ENCODE measurements at regions of chr12 and their contacts with region 1.

Region 1: DNA sequence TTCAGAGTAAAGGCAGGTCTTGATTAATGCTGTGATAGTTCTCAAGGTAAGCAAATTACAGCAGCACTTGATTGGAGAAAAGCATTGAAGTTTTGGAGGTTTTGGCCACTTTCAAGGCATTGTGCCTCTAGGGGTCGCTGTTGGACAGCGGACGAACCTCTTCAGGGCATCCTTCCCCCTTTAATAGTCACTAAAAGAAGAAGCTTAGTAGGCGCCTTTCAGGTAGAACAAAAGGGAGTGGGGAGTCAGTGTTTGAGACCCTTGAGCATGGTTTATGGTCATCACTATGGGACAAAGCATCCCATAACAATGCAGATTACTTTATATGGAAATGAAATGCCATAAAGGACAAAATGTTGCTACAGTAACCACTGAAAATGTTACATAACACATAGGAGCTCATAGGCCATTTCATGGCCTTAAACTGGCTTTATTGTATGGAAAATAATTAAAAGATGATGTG is 199.5 kb upstream of the DCN start:
- DNase-seq: peak; percentile 37
- ATAC-seq: peak; percentile 74
- H3K4me3 ChIP-seq: no peak overlapping the region
- H3K27ac ChIP-seq: no peak overlapping the region
- H3K4me1 ChIP-seq: no peaks in the 10 kb centered on the region
- H3K27me3 ChIP-seq: no peaks in the 10 kb centered on the region
- CTCF ChIP-seq: peak; percentile 83
- EP300 ChIP-seq: no peak
- POLR2A ChIP-seq: no peak
- RAD21 ChIP-seq: peak; percentile 57

Region 2: GRCh38 chr12:91695951-91696350 is 313.8 kb after region 1 on chr12:
- CTCF ChIA-PET with region 1: no interaction called
- POLR2A ChIA-PET with region 1: no interaction called
- in situ Hi-C with region 1: no loop called
- intact Hi-C with region 1: loop called (anchors 10 kb)
- DNase-seq: no peak
- ATAC-seq: no peak
- H3K4me3 ChIP-seq: no peak overlapping the region
- H3K27ac ChIP-seq: no peak overlapping the region
- H3K4me1 ChIP-seq: no peaks in the 10 kb centered on the region
- H3K27me3 ChIP-seq: no peaks in the 10 kb centered on the region
- CTCF ChIP-seq: no peak
- EP300 ChIP-seq: no peak
- POLR2A ChIP-seq: no peak
- RAD21 ChIP-seq: no peak

Region 3: DNA sequence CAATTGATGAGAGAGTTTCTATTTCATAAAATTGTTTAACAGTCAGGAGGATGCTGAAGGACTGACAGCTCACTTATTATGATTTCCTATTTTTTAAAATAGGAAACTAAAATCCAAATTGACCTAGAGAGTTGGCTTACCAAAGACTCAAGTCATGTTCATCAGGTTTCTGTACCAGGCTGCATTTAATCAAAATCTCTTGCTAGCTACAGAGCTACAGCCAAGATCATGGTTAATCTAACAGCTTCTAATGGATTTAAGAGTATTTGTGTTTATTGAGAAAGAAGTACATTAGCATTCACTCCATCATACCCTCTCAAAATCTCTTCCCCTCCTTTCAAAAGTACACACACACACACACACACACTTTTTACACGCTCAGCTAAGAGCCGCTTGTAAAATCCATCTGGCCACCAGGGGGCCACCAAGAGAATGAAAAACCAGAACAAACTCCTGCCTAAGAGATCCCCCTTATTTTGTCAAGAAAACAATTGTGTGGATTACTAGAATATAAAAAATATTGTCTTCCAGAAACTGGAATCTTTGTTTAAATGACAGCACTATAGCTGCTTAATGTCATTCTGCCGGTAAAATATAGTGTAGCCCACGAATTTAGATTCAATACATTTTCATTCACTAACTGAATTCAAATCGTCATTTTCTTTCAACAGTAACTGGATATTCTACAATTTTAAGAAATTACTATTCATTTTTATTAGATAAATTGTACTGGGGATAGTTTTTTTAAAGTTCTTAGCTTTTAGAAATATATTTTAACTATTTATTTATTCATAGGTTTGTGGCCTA is 429.6 kb after region 1 on chr12:
- CTCF ChIA-PET with region 1: no interaction called
- POLR2A ChIA-PET with region 1: no interaction called
- in situ Hi-C with region 1: no loop called
- intact Hi-C with region 1: loop called (anchors 1 kb)
- DNase-seq: peak; percentile 42
- ATAC-seq: peak; percentile 58
- H3K4me3 ChIP-seq: no peak overlapping the region
- H3K27ac ChIP-seq: no peak overlapping the region
- H3K4me1 ChIP-seq: no peaks in the 10 kb centered on the region
- H3K27me3 ChIP-seq: no peaks in the 10 kb centered on the region
- CTCF ChIP-seq: peak; percentile 64
- EP300 ChIP-seq: no peak
- POLR2A ChIP-seq: no peak
- RAD21 ChIP-seq: 0 out of 2 replicates have a peak, but pooled peaks have one; percentile 34

Region 4: DNA sequence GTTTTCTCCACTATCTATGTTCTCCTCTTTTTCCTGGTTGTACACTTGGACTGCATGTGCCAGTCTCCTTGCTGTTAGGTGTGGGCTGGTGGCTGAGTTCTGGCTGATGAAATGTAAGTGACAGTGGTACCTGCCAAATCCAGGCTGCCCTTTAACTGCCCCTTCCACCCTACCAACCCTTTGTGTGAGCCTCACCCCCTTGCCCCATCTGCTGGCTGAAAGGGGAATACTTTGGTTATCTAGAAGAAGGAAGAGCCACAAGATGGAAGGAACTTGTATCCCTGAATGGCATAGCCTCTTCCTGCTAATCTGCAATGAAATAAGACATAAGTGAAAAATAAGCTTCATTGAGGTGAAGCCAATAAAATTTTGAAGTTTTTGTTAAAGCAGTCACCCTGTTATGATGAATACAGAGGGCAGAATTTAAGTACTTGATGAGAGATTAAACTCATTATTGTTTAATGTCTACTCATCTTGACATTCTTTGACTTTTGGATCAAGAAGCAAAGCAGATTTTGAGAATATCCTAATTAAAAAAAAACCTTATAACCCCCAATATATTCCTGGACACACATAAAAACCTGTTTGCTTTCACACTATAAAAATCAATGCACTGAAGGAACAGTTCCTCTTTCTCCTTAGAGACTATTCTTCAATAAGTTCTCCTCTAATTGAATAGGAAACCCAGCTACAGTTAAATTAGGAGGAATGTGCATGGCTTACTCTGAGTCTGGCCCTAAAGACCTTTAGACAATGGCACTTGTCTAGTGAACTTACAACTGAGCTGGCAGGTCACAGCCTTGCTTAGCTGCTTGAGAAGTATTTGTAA is 1026.2 kb after region 1 on chr12:
- CTCF ChIA-PET with region 1: interaction called, 7 read pairs
- POLR2A ChIA-PET with region 1: no interaction called
- in situ Hi-C with region 1: loop called (anchors 25 kb)
- intact Hi-C with region 1: loop called (anchors 1 kb)
- DNase-seq: peak; percentile 4
- ATAC-seq: peak; percentile 81
- H3K4me3 ChIP-seq: no peak overlapping the region
- H3K27ac ChIP-seq: no peak overlapping the region
- H3K4me1 ChIP-seq: no peaks in the 10 kb centered on the region
- H3K27me3 ChIP-seq: no peaks in the 10 kb centered on the region
- CTCF ChIP-seq: peak; percentile 70
- EP300 ChIP-seq: no peak
- POLR2A ChIP-seq: no peak
- RAD21 ChIP-seq: no peak

Region 5: GRCh38 chr12:92608151-92609091 is 1226.3 kb after region 1 on chr12:
- CTCF ChIA-PET with region 1: interaction called, 4 read pairs
- POLR2A ChIA-PET with region 1: no interaction called
- in situ Hi-C with region 1: loop called (anchors 25 kb)
- intact Hi-C with region 1: loop called (anchors 1 kb)
- DNase-seq: peak; percentile 25
- ATAC-seq: peak; percentile 55; the same call in 1 of the 3 replicates
- H3K4me3 ChIP-seq: no peak overlapping the region
- H3K27ac ChIP-seq: no peak overlapping the region
- H3K4me1 ChIP-seq: no peaks in the 10 kb centered on the region
- H3K27me3 ChIP-seq: no peaks in the 10 kb centered on the region
- CTCF ChIP-seq: peak; percentile 59
- EP300 ChIP-seq: no peak
- POLR2A ChIP-seq: no peak
- RAD21 ChIP-seq: no peak

Region 6: GRCh38 chr12:92649511-92650227 is 1267.6 kb after region 1 on chr12:
- CTCF ChIA-PET with region 1: interaction called, 5 read pairs
- POLR2A ChIA-PET with region 1: no interaction called
- in situ Hi-C with region 1: no loop called
- intact Hi-C with region 1: loop called (anchors 1 kb)
- DNase-seq: peak; percentile 59
- ATAC-seq: peak; percentile 98
- H3K4me3 ChIP-seq: no peak overlapping the region
- H3K27ac ChIP-seq: no peak overlapping the region
- H3K4me1 ChIP-seq: no peaks in the 10 kb centered on the region
- H3K27me3 ChIP-seq: no peaks in the 10 kb centered on the region
- CTCF ChIP-seq: peak; percentile 83
- EP300 ChIP-seq: no peak
- POLR2A ChIP-seq: no peak
- RAD21 ChIP-seq: peak; percentile 58; the same call in 1 of the 2 replicates